ENCODE measurements at regions of chr11 and their contacts with region 1.

Region 1: DNA sequence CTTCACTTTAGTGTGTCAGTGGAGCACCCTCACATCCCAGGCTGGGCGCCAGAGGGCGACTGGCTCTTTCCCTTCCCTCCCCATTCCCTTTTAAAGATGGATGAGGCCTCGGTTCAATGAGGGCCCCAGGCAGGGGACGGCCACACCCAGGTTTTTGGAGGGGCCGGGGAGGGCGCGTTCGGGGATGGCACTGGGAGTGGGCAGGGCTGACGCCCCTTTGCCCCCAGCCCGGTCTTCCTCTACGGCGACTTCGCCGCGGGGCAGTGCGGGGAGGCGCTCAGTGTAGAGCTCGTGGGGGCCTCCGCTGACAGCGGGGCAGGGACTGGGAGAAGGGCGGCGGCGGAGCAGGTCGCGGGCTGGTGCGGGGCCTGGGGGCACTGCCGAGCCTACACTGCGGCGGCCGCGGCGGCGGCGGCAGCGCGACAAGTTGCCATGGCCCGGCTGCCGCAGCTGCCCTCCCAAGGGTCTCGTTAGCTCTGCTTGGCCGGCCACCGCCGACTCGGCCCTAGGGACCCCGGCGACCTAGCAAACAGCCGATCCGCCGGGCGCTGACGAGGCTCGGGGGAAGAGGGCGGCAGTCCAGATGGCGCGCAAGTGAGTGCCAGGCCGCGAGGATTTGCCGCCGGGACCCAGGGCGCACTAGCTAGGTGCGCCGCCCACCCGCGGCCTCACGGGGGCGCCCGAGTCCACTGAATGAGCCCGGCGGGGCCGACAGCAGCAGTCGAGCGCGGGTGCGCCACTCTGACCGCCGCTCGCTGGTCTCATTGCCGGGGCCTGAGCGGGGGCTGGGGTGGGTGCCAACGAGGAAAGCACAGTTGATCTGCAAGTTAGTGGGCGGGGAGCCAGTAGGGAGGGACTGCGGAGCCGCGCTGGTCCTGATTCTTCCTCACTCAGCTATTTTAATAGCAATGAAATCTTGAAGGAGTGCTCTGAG is 92.7 kb downstream of the RRM1 start:
- DNase-seq: peak; percentile 87
- ATAC-seq: peak; percentile 95
- H3K4me3 Mint-ChIP-seq: peak overlapping the region; percentile 68
- H3K27ac Mint-ChIP-seq: no peak overlapping the region
- H3K4me1 Mint-ChIP-seq: peaks cover 16% of the 10 kb centered on the region
- H3K27me3 Mint-ChIP-seq: peaks cover 10% of the 10 kb centered on the region

Region 2: DNA sequence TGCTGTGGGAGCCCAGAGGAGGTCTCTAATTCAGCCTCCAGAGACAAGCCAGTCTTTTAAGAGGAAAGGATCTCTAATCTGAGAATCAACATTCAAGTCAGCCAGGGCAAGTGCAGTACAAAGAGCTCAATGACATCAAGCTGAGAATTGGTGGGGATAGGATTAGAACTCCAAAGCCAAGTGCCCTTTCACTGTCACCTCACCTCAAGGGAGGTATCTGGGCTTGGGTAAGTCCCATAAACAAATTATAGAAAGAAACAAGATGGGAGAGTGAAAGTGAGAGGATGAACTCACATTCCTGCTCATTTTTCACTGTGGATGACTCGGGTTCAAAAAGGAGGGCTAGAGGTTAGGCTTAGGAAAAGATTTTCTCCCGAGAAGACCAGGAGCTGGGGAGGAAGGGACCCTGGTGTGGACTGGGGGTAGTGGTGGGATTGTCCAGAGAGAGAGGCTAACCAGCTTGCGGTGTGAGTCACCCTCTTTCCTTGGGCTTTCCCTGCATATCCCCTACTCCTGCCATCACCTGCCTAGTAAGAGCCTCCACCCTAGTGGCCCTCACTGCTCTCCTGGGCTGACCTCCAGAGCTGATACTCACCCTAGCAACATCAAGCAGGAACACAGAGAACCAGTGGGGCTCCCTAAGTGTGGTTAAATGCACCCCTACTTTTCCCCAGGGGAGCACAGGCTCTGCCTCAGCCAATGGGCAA is 22.3 kb before region 1 on chr11:
- CTCF ChIA-PET with region 1: interaction called, 11 read pairs
- DNase-seq: no peak
- ATAC-seq: no peak
- H3K4me3 Mint-ChIP-seq: no peak overlapping the region
- H3K27ac Mint-ChIP-seq: no peak overlapping the region
- H3K4me1 Mint-ChIP-seq: no peaks in the 10 kb centered on the region
- H3K27me3 Mint-ChIP-seq: no peaks in the 10 kb centered on the region

Region 3: GRCh38 chr11:4493480-4493818 is 306.1 kb after region 1 on chr11:
- CTCF ChIA-PET with region 1: interaction called, 97 read pairs
- DNase-seq: no peak
- ATAC-seq: no peak
- H3K4me3 Mint-ChIP-seq: no peak overlapping the region
- H3K27ac Mint-ChIP-seq: no peak overlapping the region
- H3K4me1 Mint-ChIP-seq: peaks cover 3% of the 10 kb centered on the region
- H3K27me3 Mint-ChIP-seq: peaks cover 40% of the 10 kb centered on the region

Region 4: GRCh38 chr11:4551346-4551979 is 364.1 kb after region 1 on chr11:
- CTCF ChIA-PET with region 1: interaction called, 15 read pairs
- DNase-seq: no peak
- ATAC-seq: no peak
- H3K4me3 Mint-ChIP-seq: no peak overlapping the region
- H3K27ac Mint-ChIP-seq: no peak overlapping the region
- H3K4me1 Mint-ChIP-seq: no peaks in the 10 kb centered on the region
- H3K27me3 Mint-ChIP-seq: peaks cover 7% of the 10 kb centered on the region

Region 5: GRCh38 chr11:4636962-4637661 is 449.8 kb after region 1 on chr11 and contains the start of gene OR51D1:
- CTCF ChIA-PET with region 1: interaction called, 17 read pairs
- DNase-seq: peak; percentile 76
- ATAC-seq: peak; percentile 96
- H3K4me3 Mint-ChIP-seq: no peak within 1 kb of the TSS
- H3K27ac Mint-ChIP-seq: no peak within 1 kb of the TSS
- H3K4me1 Mint-ChIP-seq: no peaks in the 10 kb centered on the region
- H3K27me3 Mint-ChIP-seq: peaks cover 8% of the 10 kb centered on the region
- total RNA-seq, gene OR51D1: not detected

Measured in activated CD8-positive, alpha-beta memory T cell treated with anti-CD3 and anti-CD28 coated beads, Interleukin-2, amount 10 ng/mL, durations not matched to agents 7 days and 5 days (primary cell).